HEK293 (cell line): ENCODE measurements at regions of chr16 and their contacts with region 1.

Region 1: GRCh38 chr16:84714028-84714427 is 14.2 kb downstream of the USP10 start:
- H3K4me3 ChIP-seq: no peak overlapping the region
- H3K27ac ChIP-seq: no peak overlapping the region
- H3K4me1 ChIP-seq: peaks cover 21% of the 10 kb centered on the region
- CTCF ChIP-seq: no peak

Region 2: GRCh38 chr16:84665843-84666242 is 48.2 kb before region 1 on chr16:
- CTCF ChIA-PET with region 1: no interaction called
- POLR2A ChIA-PET with region 1: no interaction called
- H3K4me3 ChIP-seq: no peak overlapping the region
- H3K27ac ChIP-seq: no peak overlapping the region
- H3K4me1 ChIP-seq: peaks cover 3% of the 10 kb centered on the region; the same call in 1 of the 2 replicates
- CTCF ChIP-seq: no peak

Region 3: DNA sequence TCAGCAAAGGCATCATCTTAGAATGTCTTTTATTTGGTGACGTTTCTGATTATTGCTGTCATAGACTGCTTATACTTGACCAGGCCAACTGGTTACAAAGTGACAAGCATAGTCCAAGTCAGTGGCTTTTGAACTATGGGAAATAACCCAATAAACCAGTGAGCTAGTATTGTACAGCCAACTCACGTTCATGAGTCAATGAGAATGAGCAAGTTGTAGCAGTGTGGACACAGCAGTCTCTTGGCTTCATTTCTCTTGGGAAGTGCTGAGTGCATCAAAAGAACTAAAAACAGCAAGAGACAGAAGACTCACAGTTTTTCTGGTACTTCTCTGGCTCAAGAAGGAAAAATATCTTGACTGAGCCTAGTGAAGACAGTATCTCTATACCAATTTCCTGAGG is 68.8 kb after region 1 on chr16:
- CTCF ChIA-PET with region 1: interaction called, 11 read pairs
- POLR2A ChIA-PET with region 1: no interaction called
- H3K4me3 ChIP-seq: no peak overlapping the region
- H3K27ac ChIP-seq: no peak overlapping the region
- H3K4me1 ChIP-seq: peaks cover 3% of the 10 kb centered on the region; the same call in 1 of the 2 replicates
- CTCF ChIP-seq: no peak